ENCODE measurements at regions of chr14 and their contacts with region 1.

Region 1: GRCh38 chr14:101964297-101965144 is at the start of gene DYNC1H1:
- DNase-seq: peak; percentile 73
- ATAC-seq: peak; percentile 82
- H3K4me3 ChIP-seq: peak within 1 kb of the TSS; percentile 63 to 95
- H3K27ac ChIP-seq: peak within 1 kb of the TSS; percentile 93
- H3K4me1 ChIP-seq: peaks cover 23 to 49% of the 10 kb centered on the region in 2 experiments; a peak in 3 of 4 replicates
- H3K27me3 ChIP-seq: no peaks in the 10 kb centered on the region
- CTCF ChIP-seq: no peak
- POLR2A ChIP-seq: peak; percentile 90
- RAD21 ChIP-seq: no peak
- total RNA-seq, gene DYNC1H1: 361 TPM

Region 2: GRCh38 chr14:101022121-101022520 is 942.4 kb before region 1 on chr14:
- CTCF ChIA-PET with region 1: no interaction called
- POLR2A ChIA-PET with region 1: no interaction called
- RAD21 ChIA-PET with region 1: no interaction called
- intact Hi-C with region 1: no loop called
- DNase-seq: no peak
- ATAC-seq: no peak
- H3K4me3 ChIP-seq: no peak overlapping the region
- H3K27ac ChIP-seq: no peak overlapping the region
- H3K4me1 ChIP-seq: no peaks in the 10 kb centered on the region
- H3K27me3 ChIP-seq: no peaks in the 10 kb centered on the region
- CTCF ChIP-seq: no peak
- POLR2A ChIP-seq: no peak
- RAD21 ChIP-seq: no peak

Region 3: DNA sequence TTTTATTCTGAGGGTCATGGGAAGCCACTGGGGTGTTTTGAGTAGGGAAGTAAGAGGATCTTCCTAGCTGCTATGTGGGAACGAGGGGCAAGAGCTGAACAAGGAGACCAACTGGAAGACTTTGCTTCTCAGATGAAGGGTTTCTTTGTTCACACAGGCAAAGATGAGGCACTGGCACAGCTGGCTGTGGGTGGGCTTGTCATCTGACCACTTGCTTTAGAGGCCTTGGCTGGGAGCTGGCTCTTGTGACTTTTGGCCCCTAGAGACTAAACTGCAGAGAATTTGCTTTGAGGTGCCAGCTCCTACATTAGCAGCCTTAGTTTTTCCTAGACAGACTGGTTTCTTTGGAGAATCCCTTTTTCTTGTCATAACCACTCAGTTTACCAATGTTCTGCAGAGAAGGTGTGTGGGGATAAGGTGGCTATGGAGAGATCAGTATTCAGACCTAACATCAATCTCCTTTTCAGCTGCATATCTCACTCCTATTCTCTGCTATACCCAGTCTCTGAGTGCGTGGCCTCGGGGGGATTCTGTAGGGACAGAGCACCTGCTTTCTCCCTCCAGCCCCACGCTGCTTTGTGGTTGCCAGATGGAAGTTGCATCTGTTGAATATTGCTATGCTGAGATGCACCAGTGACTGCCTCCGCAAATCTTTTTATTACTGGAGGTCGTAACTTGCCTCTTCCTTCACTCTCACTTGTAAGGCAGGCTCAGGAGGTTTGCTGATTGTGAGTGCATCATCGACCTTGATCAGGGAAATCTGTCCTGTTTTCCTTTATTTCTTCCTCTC is 190.3 kb before region 1 on chr14:
- CTCF ChIA-PET with region 1: interaction called, 8 read pairs
- POLR2A ChIA-PET with region 1: no interaction called
- RAD21 ChIA-PET with region 1: interaction called in 1 of 2 experiments, 6 read pairs
- intact Hi-C with region 1: loop called (anchors 5 kb)
- DNase-seq: no peak
- ATAC-seq: no peak
- H3K4me3 ChIP-seq: no peak overlapping the region
- H3K27ac ChIP-seq: no peak overlapping the region
- H3K4me1 ChIP-seq: no peaks in the 10 kb centered on the region; a peak in 1 of 4 replicates
- H3K27me3 ChIP-seq: no peaks in the 10 kb centered on the region
- CTCF ChIP-seq: no peak
- POLR2A ChIP-seq: no peak
- RAD21 ChIP-seq: no peak

Region 4: DNA sequence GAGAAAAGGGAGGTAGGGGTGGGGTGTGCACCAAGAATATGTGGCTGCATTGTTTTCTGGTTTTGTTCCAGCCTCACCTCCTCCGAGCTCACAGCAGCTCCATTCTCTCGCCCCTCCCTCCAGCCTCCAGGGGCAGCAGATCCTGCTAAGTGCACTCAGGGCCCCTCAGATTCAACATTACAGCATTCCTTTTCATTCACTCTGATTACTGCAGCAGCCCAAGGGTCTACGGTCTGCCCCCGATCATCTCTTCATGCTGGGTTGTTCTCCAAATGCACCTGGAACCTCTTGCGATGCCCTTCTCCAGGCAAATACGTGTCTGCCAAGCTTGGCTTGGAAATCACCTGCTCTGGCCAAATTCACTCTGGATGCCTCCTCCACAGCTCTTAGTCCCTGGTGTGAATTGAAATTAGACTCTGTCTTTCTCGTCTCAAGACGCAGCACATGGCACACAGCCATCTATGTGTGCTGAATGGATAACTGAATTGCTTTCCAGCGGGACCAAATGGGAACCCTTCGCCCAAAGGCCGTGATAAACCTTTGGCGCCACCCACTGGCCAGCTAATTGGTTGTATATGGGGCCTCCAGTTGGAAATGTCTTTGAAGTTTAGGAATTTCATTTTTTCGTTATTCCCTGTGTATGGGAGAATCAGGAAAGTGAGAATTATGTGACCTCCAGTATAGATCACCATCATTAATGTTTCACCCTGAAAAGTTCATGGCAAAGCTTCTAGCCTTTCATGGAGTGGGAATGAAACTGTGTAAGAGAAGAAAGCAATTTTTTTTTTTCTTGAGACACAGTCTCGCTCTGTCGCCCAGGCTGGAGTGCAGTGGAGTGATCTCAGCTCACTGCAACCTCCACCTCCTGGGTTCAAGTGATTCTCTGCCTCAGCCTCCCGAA is 131.9 kb after region 1 on chr14:
- CTCF ChIA-PET with region 1: interaction called, 8 read pairs
- POLR2A ChIA-PET with region 1: interaction called, 5 read pairs
- RAD21 ChIA-PET with region 1: interaction called in 1 of 2 experiments, 3 read pairs
- intact Hi-C with region 1: loop called (anchors 1 kb)
- DNase-seq: peak; percentile 50
- ATAC-seq: peak; percentile 86
- H3K4me3 ChIP-seq: no peak overlapping the region
- H3K27ac ChIP-seq: no peak overlapping the region
- H3K4me1 ChIP-seq: peaks cover 26 to 32% of the 10 kb centered on the region in 2 experiments
- H3K27me3 ChIP-seq: no peaks in the 10 kb centered on the region
- CTCF ChIP-seq: peak; percentile 73 to 96 (median 85)
- POLR2A ChIP-seq: no peak
- RAD21 ChIP-seq: peak; percentile 96

Region 5: DNA sequence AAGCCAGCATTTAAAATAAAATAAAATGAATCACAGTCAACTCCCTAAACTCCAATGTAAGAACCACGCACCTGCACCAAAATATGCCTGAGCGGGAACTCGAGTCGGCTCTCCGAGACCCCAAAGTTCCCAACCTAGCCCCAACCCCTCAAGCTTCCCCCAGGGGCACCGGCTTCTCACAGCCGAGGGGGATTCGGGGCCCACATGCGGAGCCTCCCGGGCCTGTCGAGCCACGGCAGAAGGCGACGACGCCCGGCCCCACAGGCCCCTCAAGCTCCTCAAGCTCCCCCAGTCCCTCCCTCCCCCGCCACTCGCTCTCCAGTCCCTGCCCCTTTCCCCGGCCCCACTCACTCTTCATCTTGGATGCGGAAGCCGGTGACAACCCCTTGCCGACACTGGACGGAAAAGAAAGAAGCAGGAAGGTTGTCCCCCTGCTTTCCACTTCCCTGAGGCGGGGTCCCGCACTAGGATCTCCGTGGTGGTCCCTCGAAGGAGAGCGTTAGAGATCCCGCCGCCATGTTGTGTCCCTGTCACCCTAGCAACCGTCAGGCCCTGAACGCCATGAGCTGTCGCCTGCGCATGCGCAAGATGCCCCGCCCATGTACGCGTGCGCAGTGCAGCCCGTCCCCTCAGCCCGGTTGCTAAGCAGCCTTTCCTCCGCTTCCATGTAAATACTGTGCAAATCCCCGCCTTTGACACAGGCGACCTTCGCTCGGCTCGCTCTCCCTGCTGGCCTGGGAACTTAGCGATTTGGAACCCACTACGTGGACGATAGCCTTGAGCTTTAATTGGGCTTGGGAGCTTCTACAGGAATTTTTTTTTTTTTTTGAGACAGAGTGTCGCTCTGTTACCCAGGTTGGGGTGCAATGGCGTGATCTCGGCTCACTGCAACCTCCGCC is 340.3 kb after region 1 on chr14 and contains the start of gene MOK:
- CTCF ChIA-PET with region 1: no interaction called
- POLR2A ChIA-PET with region 1: interaction called, 10 read pairs
- RAD21 ChIA-PET with region 1: no interaction called
- intact Hi-C with region 1: no loop called
- DNase-seq: peak; percentile 92
- ATAC-seq: peak; percentile 87
- H3K4me3 ChIP-seq: peak within 1 kb of the TSS; percentile 67 to 77
- H3K27ac ChIP-seq: peak within 1 kb of the TSS; percentile 58
- H3K4me1 ChIP-seq: peaks cover 14 to 22% of the 10 kb centered on the region in 2 experiments
- H3K27me3 ChIP-seq: no peaks in the 10 kb centered on the region
- CTCF ChIP-seq: no peak
- POLR2A ChIP-seq: no peak
- RAD21 ChIP-seq: no peak
- total RNA-seq, gene MOK: 9.4 TPM

Measured in HCT116 (cell line).